ENCODE measurements at regions of chr1 and their contacts with region 1.

Region 1: GRCh38 chr1:41432481-41433280 is 51.8 kb downstream of the EDN2 start:
- DNase-seq: peak in 4 of 5 donors; percentile 31 to 44 (median 40)
- H3K4me3 ChIP-seq: no peak overlapping the region
- H3K4me3 Mint-ChIP-seq: no peak overlapping the region
- H3K27ac ChIP-seq: no peak overlapping the region
- H3K27ac Mint-ChIP-seq: no peak overlapping the region
- H3K4me1 ChIP-seq: no peaks in the 10 kb centered on the region
- H3K4me1 Mint-ChIP-seq: no peaks in the 10 kb centered on the region
- H3K27me3 ChIP-seq: peaks cover 5% of the 10 kb centered on the region
- H3K27me3 Mint-ChIP-seq: peaks cover 16 to 34% of the 10 kb centered on the region in 2 donors

Region 2: GRCh38 chr1:41282679-41283317 is 149.9 kb before region 1 on chr1:
- CTCF ChIA-PET with region 1: interaction called, 3 read pairs
- POLR2A ChIA-PET with region 1: no interaction called
- intact Hi-C with region 1: loop called (anchors 1 kb)
- DNase-seq: peak in 2 of 5 donors; percentile 2 to 6
- H3K4me3 ChIP-seq: no peak overlapping the region
- H3K4me3 Mint-ChIP-seq: no peak overlapping the region
- H3K27ac ChIP-seq: no peak overlapping the region
- H3K27ac Mint-ChIP-seq: no peak overlapping the region
- H3K4me1 ChIP-seq: no peaks in the 10 kb centered on the region
- H3K4me1 Mint-ChIP-seq: peaks cover 0 to 2% (median 0%) of the 10 kb centered on the region in 4 donors
- H3K27me3 ChIP-seq: no peaks in the 10 kb centered on the region
- H3K27me3 Mint-ChIP-seq: peaks cover 28 to 31% of the 10 kb centered on the region in 2 donors

Region 3: DNA sequence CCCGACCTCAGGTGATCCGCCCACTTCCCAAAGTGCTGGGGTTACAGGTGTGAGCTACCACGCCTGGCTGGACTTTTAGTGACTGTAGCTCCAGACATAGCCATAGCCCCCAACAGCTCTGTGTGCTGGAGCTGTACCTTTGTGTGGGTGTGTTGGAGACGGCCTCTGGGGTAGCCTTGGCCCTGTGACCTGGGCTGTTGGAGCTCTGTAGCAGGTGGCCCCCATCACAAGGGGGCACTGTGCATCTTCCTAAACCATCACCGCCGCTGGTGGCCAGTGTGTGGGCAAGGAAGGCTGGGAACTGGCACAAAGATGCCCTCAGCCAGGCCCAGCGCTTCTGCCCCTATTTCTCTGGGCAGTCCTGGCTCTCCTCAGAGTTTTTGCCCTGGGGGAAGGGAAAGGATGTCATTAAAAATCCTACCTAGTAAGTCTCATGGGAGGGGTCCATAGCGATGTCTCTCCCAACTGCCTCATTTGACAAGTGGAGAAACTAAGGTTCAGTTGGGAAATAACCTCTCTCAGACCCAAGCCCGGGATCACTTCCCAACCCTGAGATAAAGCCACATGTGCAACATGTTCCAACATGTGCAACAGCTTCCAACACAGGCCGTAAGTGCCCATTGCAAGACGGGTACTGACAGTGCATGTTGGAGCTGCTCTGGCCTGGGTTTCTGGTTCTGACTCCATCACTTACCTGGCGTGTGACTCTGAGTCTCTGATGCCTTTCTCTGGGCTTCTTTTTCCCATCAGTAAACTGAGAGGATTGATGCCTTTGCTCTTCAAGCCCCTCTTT is 109.7 kb before region 1 on chr1:
- CTCF ChIA-PET with region 1: no interaction called
- POLR2A ChIA-PET with region 1: no interaction called
- intact Hi-C with region 1: loop called (anchors 5 kb)
- DNase-seq: peak in 2 of 5 donors; percentile 4 to 5
- H3K4me3 ChIP-seq: no peak overlapping the region
- H3K4me3 Mint-ChIP-seq: no peak overlapping the region
- H3K27ac ChIP-seq: no peak overlapping the region
- H3K27ac Mint-ChIP-seq: no peak overlapping the region
- H3K4me1 ChIP-seq: no peaks in the 10 kb centered on the region
- H3K4me1 Mint-ChIP-seq: no peaks in the 10 kb centered on the region
- H3K27me3 ChIP-seq: no peaks in the 10 kb centered on the region
- H3K27me3 Mint-ChIP-seq: peaks cover 0 to 6% of the 10 kb centered on the region in 2 donors

Region 4: DNA sequence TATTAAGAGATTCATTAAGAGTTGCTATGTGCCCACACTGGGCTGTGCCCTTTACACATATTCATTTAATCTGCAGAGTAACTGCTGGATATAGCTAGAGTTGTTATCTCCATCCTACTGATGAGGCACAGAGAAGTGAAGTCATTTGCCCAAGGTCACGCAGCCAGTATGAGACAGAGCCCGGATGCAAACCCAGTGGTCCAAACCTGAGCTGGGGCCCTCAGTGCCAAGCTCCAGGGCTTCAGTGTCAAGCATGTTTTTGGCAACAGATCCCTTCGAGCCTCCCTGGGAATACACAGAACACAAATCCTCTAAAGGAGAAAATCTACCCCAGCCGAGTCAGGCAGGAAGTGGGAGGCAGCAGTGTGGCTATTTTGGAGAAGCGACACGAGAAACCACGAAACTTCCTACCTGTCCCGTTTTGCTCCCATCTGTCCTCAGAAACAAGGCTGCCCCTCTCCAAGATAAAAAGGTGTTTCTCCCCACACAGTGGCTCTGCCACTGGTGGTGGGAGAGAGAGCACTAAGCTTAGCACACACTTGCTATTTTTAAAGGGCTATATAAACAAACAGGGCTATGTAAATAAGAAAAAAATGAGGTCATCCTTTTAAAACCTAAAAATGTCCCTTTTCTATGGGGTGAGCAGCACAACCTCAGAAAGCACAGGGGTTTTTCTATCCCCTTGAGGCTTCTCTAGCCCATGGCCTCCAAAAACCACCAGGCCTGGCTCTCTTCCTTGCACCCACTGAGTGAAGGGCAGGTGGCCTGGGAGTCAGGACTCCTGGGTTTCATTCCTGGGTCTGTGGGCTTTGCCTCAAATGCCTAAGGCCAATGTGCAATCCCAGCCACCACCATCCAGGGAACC is 190.4 kb after region 1 on chr1:
- CTCF ChIA-PET with region 1: no interaction called
- POLR2A ChIA-PET with region 1: no interaction called
- intact Hi-C with region 1: no loop called
- DNase-seq: no peak
- H3K4me3 ChIP-seq: no peak overlapping the region
- H3K4me3 Mint-ChIP-seq: peak overlapping the region in 6 of 8 donors; percentile 9 to 70 (median 42)
- H3K27ac ChIP-seq: no peak overlapping the region
- H3K27ac Mint-ChIP-seq: peak overlapping the region in 5 of 7 donors; percentile 14 to 75 (median 30)
- H3K4me1 ChIP-seq: peaks cover 16% of the 10 kb centered on the region
- H3K4me1 Mint-ChIP-seq: peaks cover 17 to 32% (median 25%) of the 10 kb centered on the region in 4 donors
- H3K27me3 ChIP-seq: no peaks in the 10 kb centered on the region
- H3K27me3 Mint-ChIP-seq: no peaks in the 10 kb centered on the region

Measured in CD4-positive, alpha-beta memory T cell (primary cell).